WTC11 (cell line): ENCODE measurements at regions of chr1 and their contacts with region 1.

Region 1: DNA sequence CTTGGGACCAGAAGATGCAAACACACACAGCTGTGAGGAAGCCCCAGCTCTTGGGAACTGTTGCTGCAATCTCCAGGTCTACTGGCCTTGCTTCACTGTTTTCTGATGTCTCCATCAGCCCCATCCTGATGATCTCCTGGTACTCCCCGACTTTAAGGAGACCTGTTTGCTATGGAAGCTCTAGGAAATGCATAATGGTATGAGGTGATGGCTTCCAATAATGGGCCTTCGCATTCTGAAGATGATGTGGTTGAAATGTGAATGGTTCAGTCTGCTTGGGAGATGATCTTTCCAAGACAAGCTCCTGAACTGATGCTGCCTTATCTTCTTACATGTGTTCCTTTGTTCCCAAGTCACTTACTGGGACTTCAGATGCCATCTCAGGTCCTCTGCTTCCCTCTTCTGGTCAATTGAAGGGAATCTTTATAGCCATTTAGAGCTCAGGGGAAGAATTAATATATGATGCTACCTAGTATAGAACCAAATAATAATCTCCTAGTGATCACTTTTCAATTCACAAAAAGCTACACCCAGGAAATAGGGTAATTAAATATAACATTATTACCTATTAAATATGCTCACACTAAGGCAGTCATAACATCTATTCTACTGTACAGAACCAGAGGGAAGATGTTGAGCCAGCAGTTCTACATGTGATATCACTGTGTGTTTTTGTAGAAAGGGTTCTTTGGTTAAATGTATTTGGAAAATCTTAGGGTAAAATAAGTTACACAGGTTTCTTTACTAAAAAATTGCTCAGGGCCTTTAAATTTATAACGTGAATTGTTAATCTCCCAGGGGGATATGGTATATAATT is 73.9 kb upstream of the VTCN1 start:
- DNase-seq: no peak
- ATAC-seq: peak; percentile 87
- H3K4me3 Mint-ChIP-seq: no peak overlapping the region
- H3K27ac Mint-ChIP-seq: no peak overlapping the region
- H3K4me1 Mint-ChIP-seq: peaks cover 17% of the 10 kb centered on the region
- H3K27me3 Mint-ChIP-seq: no peaks in the 10 kb centered on the region
- CTCF ChIP-seq: peak; percentile 30; the same call in 1 of the 2 replicates

Region 2: GRCh38 chr1:117059678-117060440 is 224.7 kb before region 1 on chr1 and contains the start of gene TTF2:
- CTCF ChIA-PET with region 1: interaction called, 18 read pairs
- POLR2A ChIA-PET with region 1: interaction called, 5 read pairs
- DNase-seq: peak; percentile 97
- ATAC-seq: peak; percentile 98
- H3K4me3 Mint-ChIP-seq: no peak within 1 kb of the TSS
- H3K27ac Mint-ChIP-seq: peak within 1 kb of the TSS; percentile 72
- H3K4me1 Mint-ChIP-seq: peaks cover 18% of the 10 kb centered on the region
- H3K27me3 Mint-ChIP-seq: no peaks in the 10 kb centered on the region
- CTCF ChIP-seq: no peak
- total RNA-seq, gene TTF2: 78.9 to 88.8 TPM (median 79.1 TPM) in 3 replicates

Region 3: DNA sequence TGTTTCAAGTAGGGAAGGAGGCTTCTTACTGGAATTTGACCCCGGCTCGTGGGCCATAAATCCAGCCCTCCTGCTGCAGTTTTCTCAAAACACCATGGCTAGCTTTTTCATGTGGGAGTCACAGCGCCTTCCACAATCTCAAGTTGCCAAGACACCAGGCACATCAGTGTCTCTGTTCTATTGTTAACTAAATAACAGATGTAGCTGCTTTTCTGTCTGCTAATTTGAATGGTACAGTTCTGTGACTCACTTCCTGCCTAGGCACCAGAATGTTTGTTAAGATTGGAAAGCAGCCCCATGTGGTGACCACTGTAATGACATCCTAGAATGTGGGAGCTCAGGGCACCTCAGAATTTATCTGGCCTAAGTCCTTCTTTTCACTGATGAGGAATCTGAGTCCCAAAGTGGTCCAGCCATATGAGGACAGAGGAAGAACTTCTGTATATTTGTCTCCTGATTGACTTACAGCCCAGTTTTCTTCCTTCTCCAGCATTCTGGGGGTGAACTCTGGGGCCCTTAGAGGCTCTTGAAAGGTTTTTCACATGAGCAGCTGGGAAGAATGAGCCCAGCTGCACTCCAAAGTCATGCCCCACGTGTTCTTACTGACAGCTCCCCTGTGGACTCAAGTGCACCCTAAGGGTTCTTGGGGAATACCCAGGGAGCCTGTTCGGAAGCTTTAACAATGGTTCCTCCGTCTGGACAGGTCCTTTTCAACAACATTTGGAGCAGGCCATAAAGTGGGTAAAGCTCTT is 190.6 kb before region 1 on chr1:
- CTCF ChIA-PET with region 1: interaction called, 31 read pairs
- POLR2A ChIA-PET with region 1: no interaction called
- DNase-seq: peak; percentile 16
- ATAC-seq: peak; percentile 71
- H3K4me3 Mint-ChIP-seq: no peak overlapping the region
- H3K27ac Mint-ChIP-seq: peak overlapping the region; percentile 35
- H3K4me1 Mint-ChIP-seq: peaks cover 15% of the 10 kb centered on the region
- H3K27me3 Mint-ChIP-seq: no peaks in the 10 kb centered on the region
- CTCF ChIP-seq: no peak

Region 4: DNA sequence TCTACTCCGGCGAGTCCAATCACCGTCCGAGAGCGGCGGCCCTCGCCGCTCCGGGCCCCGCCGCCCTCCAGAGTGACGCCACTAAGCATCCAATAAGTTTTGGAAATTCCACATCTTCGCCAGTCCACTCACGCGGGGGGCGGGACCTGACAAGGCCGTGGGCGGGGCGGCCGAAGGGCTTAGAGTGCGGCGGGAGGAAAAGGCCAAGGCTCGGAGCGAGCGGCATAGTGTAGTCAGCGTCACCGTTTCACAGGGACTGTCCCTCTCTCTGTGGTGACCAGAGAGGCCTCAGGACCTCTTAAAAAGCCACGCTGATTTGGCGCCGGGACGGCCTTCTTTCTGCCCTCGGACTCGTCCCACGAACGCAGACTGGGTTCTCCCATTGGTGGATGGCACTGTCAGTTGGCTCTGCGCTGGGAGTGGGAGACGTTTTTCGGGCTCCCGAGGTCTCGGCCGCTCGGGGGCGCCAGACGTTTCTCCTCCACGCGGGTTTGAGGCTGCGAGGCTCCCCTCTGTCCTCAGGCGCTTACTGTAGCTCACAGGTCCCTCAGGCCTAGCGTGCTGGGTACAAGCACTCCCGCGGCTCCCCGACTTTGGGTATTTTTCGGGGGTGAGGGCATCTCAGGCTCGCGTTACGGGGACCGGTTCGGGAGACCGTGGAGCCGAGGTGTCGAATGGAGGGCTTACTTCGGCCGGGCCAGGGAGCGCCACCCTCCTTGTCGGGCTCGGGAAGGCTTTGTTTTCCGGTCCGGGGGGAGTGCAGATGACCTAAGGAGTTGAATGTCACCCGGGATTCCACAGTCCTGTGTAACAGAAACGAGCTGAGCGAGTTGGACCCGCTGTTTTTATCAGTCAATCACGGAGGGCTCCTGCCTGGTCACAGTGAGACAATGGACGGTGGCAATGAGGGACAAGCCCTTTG is 162.6 kb before region 1 on chr1:
- CTCF ChIA-PET with region 1: interaction called, 63 read pairs
- POLR2A ChIA-PET with region 1: interaction called, 5 read pairs
- DNase-seq: peak; percentile 92
- ATAC-seq: peak; percentile 95
- H3K4me3 Mint-ChIP-seq: peak overlapping the region; percentile 80
- H3K27ac Mint-ChIP-seq: peak overlapping the region; percentile 83; the same call in 1 of the 2 replicates
- H3K4me1 Mint-ChIP-seq: peaks cover 13% of the 10 kb centered on the region
- H3K27me3 Mint-ChIP-seq: no peaks in the 10 kb centered on the region
- CTCF ChIP-seq: no peak

Region 5: GRCh38 chr1:117137316-117137855 is 147.2 kb before region 1 on chr1:
- CTCF ChIA-PET with region 1: interaction called, 26 read pairs
- POLR2A ChIA-PET with region 1: no interaction called
- DNase-seq: no peak
- ATAC-seq: no peak; the same call in 1 of the 2 replicates
- H3K4me3 Mint-ChIP-seq: no peak overlapping the region
- H3K27ac Mint-ChIP-seq: 0 out of 2 replicates have a peak overlapping the region, but pooled peaks have one; percentile 9
- H3K4me1 Mint-ChIP-seq: peaks cover 48% of the 10 kb centered on the region
- H3K27me3 Mint-ChIP-seq: no peaks in the 10 kb centered on the region
- CTCF ChIP-seq: no peak

Region 6: DNA sequence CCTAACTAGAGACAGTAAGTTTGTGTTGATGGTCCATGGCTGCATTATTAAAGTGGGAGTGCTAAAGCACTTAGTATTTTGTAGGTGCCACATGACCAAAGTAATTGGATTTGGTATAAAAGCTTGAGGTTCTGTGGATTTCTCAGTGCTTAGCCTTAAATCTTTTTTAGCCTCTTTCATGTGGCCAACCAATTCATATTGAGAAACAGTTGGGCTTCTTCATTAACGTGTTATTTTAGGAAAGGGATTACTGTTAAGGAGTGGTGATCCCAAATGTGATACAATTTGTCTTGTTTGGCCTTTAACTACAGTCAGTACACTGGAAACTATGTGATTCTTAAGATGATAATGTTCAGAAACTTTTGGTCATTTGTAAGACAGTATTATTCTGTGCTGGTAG is 108.2 kb after region 1 on chr1:
- CTCF ChIA-PET with region 1: no interaction called
- POLR2A ChIA-PET with region 1: no interaction called
- DNase-seq: no peak
- ATAC-seq: no peak
- H3K4me3 Mint-ChIP-seq: no peak overlapping the region
- H3K27ac Mint-ChIP-seq: no peak overlapping the region
- H3K4me1 Mint-ChIP-seq: peaks cover 28% of the 10 kb centered on the region
- H3K27me3 Mint-ChIP-seq: no peaks in the 10 kb centered on the region
- CTCF ChIP-seq: no peak